Posterior vena cava (tissue), 2 donors: ENCODE measurements at regions of chr2 and their contacts with region 1.

Region 1: DNA sequence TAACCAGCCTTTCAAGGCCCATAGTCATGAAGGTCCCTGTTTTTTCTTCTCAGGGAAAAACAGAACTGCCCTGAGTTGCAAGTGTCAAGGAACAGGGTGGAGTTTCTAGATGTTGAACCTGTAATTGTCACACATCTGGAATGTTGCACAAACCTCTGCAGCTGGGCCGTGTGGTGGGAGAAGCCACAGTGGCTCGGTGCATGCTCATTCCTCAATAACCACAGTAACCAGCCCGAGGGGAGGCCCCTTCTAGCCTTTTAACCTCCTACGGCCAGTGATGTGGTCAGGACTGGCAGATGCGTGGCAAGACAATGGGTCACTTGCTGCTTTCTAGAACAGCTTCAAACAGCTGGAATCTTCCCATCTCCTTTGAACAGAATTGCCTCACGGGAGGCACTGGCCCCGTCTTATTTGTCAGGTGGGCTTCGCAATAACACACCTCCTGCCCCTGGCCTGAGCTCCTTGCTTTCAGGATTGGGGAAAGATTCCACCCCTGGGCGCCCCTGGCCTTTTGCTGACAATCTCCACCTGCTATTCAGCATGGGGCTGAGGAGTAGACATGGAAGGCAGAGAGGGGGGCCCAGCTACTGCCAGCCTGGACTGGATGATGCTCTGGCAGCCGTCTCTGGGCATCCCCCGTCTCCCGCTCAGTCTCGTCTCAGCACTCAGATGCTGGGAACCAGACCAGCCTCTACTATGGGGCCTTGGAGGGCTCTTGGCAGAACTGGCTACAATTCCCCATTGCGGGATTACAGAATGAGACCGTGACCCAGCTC is 102.9 kb downstream of the KLHL29 start:
- DNase-seq: peak; percentile 42

Region 2: GRCh38 chr2:23414871-23415270 is 73.1 kb before region 1 on chr2:
- intact Hi-C with region 1: no loop called
- DNase-seq: no peak

Region 3: GRCh38 chr2:23452853-23453420 is 35.0 kb before region 1 on chr2:
- intact Hi-C with region 1: loop called in 1 of 2 experiments (anchors 1 kb)
- DNase-seq: no peak